Caco-2 (cell line): ENCODE measurements at regions of chr19 and their contacts with region 1.

Region 1: DNA sequence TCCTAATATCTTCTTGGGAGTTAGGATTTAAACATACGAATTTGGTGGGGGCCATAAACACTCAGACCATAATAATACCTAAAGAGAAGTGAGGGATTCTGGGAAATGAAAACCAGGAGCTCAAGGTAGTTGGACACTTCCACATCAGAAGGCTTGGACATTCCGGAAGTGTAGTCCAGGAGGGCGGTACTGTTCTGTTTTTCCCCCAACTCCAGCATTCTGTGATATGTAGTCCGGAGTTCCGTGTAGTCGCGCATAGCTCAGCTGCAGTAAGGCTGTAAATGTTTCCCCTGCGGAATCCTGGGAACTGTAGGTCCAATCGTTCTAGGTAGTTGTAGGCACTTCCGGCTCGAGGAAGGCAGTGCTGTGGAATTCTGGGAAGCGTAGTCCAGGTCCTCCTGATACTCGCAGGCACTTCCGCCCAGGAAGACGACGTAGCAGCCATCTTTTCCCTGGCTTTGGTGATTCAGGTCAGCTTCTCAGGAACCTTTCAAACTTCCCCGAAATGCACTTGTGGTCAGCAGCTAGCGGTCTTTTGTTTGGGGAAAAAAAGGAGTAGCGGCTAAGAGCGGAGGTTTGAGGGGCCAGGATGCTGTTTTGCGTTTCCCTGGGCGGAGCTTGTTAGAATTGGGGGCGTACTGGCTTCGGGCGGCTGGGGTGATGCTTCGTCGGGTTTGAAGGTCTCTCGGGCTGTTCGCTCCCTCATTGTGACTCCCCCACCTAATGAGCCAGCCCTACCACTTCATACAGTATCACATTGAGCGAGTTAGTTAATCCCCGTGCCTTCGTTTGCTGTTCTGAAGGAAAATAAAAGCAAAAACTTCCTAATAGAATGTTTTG is at the start of gene ZNF226:
- DNase-seq: peak; percentile 95 to 98
- H3K4me3 ChIP-seq: peak within 1 kb of the TSS; percentile 79
- H3K4me3 Mint-ChIP-seq: peak within 1 kb of the TSS; percentile 95
- H3K27ac Mint-ChIP-seq: peak within 1 kb of the TSS; percentile 98
- H3K4me1 ChIP-seq: 0 out of 2 replicates have a peak, but pooled peaks cover 10% of the 10 kb centered on the region
- H3K4me1 Mint-ChIP-seq: no peaks in the 10 kb centered on the region
- H3K27me3 ChIP-seq: no peaks in the 10 kb centered on the region
- H3K27me3 Mint-ChIP-seq: no peaks in the 10 kb centered on the region
- CTCF ChIP-seq: no peak
- total RNA-seq, gene ZNF226: 27.0 and 28.0 TPM in 2 replicates

Region 2: GRCh38 chr19:44051654-44052402 is 113.1 kb before region 1 on chr19 and contains the start of gene ZNF223:
- CTCF ChIA-PET with region 1: no interaction called
- POLR2A ChIA-PET with region 1: interaction called, 7 read pairs
- intact Hi-C with region 1: loop called (anchors 1 kb)
- DNase-seq: peak; percentile 98
- H3K4me3 ChIP-seq: peak within 1 kb of the TSS; percentile 69
- H3K4me3 Mint-ChIP-seq: peak within 1 kb of the TSS; percentile 74
- H3K27ac Mint-ChIP-seq: peak within 1 kb of the TSS; percentile 85
- H3K4me1 ChIP-seq: peaks cover 7% of the 10 kb centered on the region
- H3K4me1 Mint-ChIP-seq: peaks cover 30% of the 10 kb centered on the region
- H3K27me3 ChIP-seq: no peaks in the 10 kb centered on the region
- H3K27me3 Mint-ChIP-seq: no peaks in the 10 kb centered on the region
- CTCF ChIP-seq: no peak
- total RNA-seq, gene ZNF223: 9.9 and 11.3 TPM in 2 replicates

Region 3: GRCh38 chr19:44141191-44142058 is 23.5 kb before region 1 on chr19 and contains the start of gene ZNF234:
- CTCF ChIA-PET with region 1: no interaction called
- POLR2A ChIA-PET with region 1: interaction called, 3 read pairs
- intact Hi-C with region 1: loop called (anchors 1 kb)
- DNase-seq: peak; percentile 88 to 92
- H3K4me3 ChIP-seq: peak within 1 kb of the TSS; percentile 80
- H3K4me3 Mint-ChIP-seq: peak within 1 kb of the TSS; percentile 84
- H3K27ac Mint-ChIP-seq: peak within 1 kb of the TSS; percentile 54
- H3K4me1 ChIP-seq: 0 out of 2 replicates have a peak, but pooled peaks cover 4% of the 10 kb centered on the region
- H3K4me1 Mint-ChIP-seq: no peaks in the 10 kb centered on the region
- H3K27me3 ChIP-seq: no peaks in the 10 kb centered on the region
- H3K27me3 Mint-ChIP-seq: peaks cover 9% of the 10 kb centered on the region
- CTCF ChIP-seq: no peak
- total RNA-seq, gene ZNF234: 9.4 and 13.3 TPM in 2 replicates

Region 4: GRCh38 chr19:44190020-44190419 is 25.1 kb after region 1 on chr19:
- CTCF ChIA-PET with region 1: no interaction called
- POLR2A ChIA-PET with region 1: no interaction called
- intact Hi-C with region 1: no loop called
- DNase-seq: no peak
- H3K4me3 ChIP-seq: no peak overlapping the region
- H3K4me3 Mint-ChIP-seq: no peak overlapping the region
- H3K27ac Mint-ChIP-seq: no peak overlapping the region
- H3K4me1 ChIP-seq: no peaks in the 10 kb centered on the region
- H3K4me1 Mint-ChIP-seq: no peaks in the 10 kb centered on the region
- H3K27me3 ChIP-seq: no peaks in the 10 kb centered on the region
- H3K27me3 Mint-ChIP-seq: peaks cover 17% of the 10 kb centered on the region
- CTCF ChIP-seq: no peak

Region 5: DNA sequence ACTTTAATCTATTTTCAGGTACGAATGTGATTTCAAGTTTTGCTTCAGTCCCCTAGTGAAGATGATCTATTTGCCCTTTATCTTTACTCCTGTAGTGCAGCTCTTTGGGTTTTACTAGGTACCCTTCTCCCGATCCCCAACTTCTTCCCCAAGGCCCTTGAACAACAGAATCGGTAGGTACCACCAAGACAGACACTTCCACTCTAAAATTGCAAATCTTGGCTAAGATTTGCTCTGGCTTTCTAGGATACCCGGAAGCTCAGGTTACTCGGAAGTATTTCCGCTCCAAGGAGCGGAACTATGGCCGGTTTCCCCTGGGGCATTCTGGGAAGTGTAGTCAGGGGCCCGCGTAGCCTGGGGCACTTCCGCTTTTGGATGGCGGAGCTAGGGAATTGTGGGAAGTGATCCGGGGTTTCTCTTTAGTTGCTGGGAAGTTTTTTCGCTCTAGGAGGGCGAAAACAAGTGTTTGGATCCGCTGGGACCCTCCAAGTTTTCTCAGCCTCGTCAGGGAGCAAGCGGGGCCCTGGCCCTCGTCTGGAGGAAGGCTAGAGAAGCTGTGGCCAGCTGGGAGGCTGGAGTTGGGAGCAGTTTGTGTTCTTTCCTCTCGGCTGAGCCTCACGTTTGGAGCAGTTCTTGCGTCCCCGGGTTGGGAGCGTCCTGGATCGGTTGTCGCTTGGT is 42.4 kb after region 1 on chr19:
- CTCF ChIA-PET with region 1: interaction called, 6 read pairs
- POLR2A ChIA-PET with region 1: interaction called, 11 read pairs
- intact Hi-C with region 1: loop called (anchors 1 kb)
- DNase-seq: peak; percentile 95 to 96
- H3K4me3 ChIP-seq: peak overlapping the region; percentile 43
- H3K4me3 Mint-ChIP-seq: peak overlapping the region; percentile 89
- H3K27ac Mint-ChIP-seq: peak overlapping the region; percentile 80
- H3K4me1 ChIP-seq: no peaks in the 10 kb centered on the region
- H3K4me1 Mint-ChIP-seq: peaks cover 6% of the 10 kb centered on the region
- H3K27me3 ChIP-seq: no peaks in the 10 kb centered on the region
- H3K27me3 Mint-ChIP-seq: peaks cover under 1% of the 10 kb centered on the region
- CTCF ChIP-seq: no peak

Region 6: GRCh38 chr19:44500148-44500956 is 335.5 kb after region 1 on chr19 and contains the start of gene ZNF180:
- CTCF ChIA-PET with region 1: no interaction called
- POLR2A ChIA-PET with region 1: interaction called, 9 read pairs
- intact Hi-C with region 1: loop called (anchors 1 kb)
- DNase-seq: peak; percentile 98 to 99
- H3K4me3 ChIP-seq: peak within 1 kb of the TSS; percentile 99
- H3K4me3 Mint-ChIP-seq: peak within 1 kb of the TSS; percentile 98
- H3K27ac Mint-ChIP-seq: peak within 1 kb of the TSS; percentile 92
- H3K4me1 ChIP-seq: peaks cover 8% of the 10 kb centered on the region; the same call in 1 of the 2 replicates
- H3K4me1 Mint-ChIP-seq: peaks cover 25% of the 10 kb centered on the region
- H3K27me3 ChIP-seq: no peaks in the 10 kb centered on the region
- H3K27me3 Mint-ChIP-seq: peaks cover 4% of the 10 kb centered on the region
- CTCF ChIP-seq: peak; percentile 38 to 83
- total RNA-seq, gene ZNF180: 9.1 and 13.3 TPM in 2 replicates

Region 7: GRCh38 chr19:44741841-44742352 is 577.0 kb after region 1 on chr19:
- CTCF ChIA-PET with region 1: no interaction called
- POLR2A ChIA-PET with region 1: no interaction called
- intact Hi-C with region 1: no loop called
- DNase-seq: peak; percentile 82 to 87
- H3K4me3 ChIP-seq: no peak overlapping the region
- H3K4me3 Mint-ChIP-seq: peak overlapping the region; percentile 44
- H3K27ac Mint-ChIP-seq: peak overlapping the region; percentile 97
- H3K4me1 ChIP-seq: peaks cover 66% of the 10 kb centered on the region
- H3K4me1 Mint-ChIP-seq: peaks cover 31% of the 10 kb centered on the region
- H3K27me3 ChIP-seq: no peaks in the 10 kb centered on the region
- H3K27me3 Mint-ChIP-seq: no peaks in the 10 kb centered on the region
- CTCF ChIP-seq: no peak

Region 8: DNA sequence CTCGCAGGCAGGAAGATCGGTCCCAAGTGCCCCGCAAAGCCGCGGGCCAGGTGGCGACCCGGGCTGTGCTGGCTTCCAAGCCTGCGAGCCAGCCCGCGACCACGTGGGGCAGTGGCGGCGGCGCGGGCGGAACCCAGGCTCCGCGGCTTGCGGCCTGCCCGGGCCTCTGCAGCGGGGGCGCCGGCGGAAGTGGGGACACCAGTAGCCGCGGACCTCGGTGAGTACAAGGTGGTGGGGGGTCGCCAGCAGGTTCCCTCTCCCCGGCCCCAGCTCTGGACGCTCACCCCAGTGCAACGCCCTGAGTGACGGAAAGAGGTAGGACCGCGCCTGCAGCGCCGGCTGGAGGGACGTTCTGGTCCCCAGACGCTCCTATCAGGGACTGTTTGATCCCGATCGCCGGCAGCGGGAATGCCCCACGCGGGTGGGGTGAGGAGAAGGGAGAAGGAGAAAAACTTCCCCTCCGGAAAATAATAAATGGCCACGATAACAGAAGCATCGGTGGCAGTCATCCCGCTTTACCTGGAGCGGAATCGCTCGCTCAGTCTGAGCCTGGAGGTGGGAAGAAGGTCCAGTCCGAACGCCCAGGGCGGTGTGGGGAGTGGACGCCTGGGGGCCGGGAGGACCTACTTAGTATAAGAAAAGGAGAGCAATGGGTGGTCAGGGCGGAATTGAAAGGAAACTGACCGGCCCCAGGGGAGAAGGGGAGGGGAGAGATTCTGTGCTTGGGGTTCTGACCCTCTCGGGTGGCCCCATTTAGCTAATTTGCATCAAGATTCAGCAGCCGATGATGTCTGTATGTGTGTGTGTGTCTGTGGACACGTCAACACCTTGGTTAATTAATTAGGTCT is 914.4 kb after region 1 on chr19 and contains the start of gene GEMIN7:
- CTCF ChIA-PET with region 1: no interaction called
- POLR2A ChIA-PET with region 1: no interaction called
- intact Hi-C with region 1: no loop called
- DNase-seq: peak; percentile 82 to 94
- H3K4me3 ChIP-seq: peak within 1 kb of the TSS; percentile 99
- H3K4me3 Mint-ChIP-seq: peak within 1 kb of the TSS; percentile 98
- H3K27ac Mint-ChIP-seq: peak within 1 kb of the TSS; percentile 94
- H3K4me1 ChIP-seq: peaks cover 24% of the 10 kb centered on the region
- H3K4me1 Mint-ChIP-seq: peaks cover 28% of the 10 kb centered on the region
- H3K27me3 ChIP-seq: no peaks in the 10 kb centered on the region
- H3K27me3 Mint-ChIP-seq: no peaks in the 10 kb centered on the region
- CTCF ChIP-seq: peak in 1 of 2 experiments; percentile 28
- total RNA-seq, gene GEMIN7: 45.8 and 49.3 TPM in 2 replicates